BJ (cell line): ENCODE measurements at regions of chr1 and their contacts with region 1.

Region 1: DNA sequence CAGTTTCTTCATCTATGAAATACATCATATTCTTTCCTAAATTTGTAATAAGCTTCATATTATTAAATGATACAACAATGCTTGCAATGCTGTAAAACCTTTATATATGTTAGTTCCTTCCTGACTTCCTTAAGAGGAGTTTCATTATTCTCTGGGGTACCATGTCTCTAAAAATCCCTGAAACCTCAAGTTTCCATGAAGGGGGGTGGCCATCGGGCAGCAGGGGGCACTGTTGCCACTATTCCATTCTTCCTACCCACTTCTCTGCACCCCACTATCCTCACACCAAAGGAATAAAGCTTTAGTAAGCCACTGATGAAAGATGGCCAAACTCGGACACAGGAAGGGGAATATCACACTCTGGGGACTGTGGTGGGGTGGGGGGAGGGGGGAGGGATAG is 9.0 kb upstream of the DMRTB1 start:
- DNase-seq: no peak
- H3K4me3 ChIP-seq: no peak overlapping the region
- H3K27me3 ChIP-seq: no peaks in the 10 kb centered on the region
- CTCF ChIP-seq: peak; percentile 33

Region 2: GRCh38 chr1:53381790-53382401 is 68.3 kb before region 1 on chr1:
- CTCF ChIA-PET with region 1: no interaction called
- POLR2A ChIA-PET with region 1: no interaction called
- DNase-seq: no peak
- H3K4me3 ChIP-seq: no peak overlapping the region
- H3K27me3 ChIP-seq: peaks cover 6% of the 10 kb centered on the region
- CTCF ChIP-seq: no peak

Region 3: DNA sequence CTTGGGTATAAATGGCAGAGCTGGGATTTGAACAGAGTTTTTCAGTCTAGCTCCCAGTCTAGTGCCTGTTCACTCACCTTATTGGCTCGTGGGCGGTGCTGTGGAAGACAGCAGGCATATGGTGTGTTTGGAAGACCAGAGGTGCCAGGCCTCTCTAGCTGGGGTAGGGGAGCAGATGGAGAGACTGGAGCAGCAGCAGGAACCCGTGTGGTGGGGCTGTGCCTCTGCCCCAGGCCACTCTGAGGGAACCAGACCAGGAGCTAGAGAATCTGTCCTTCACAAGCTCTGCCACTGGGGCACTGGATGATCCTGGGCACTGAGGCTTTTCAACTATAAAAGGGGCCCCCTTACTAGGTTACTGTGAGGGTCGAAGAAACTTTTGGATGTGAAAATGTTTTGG is 14.9 kb after region 1 on chr1:
- CTCF ChIA-PET with region 1: interaction called, 10 read pairs
- POLR2A ChIA-PET with region 1: no interaction called
- DNase-seq: no peak
- H3K4me3 ChIP-seq: no peak overlapping the region
- H3K27me3 ChIP-seq: peaks cover 3% of the 10 kb centered on the region; the same call in 1 of the 2 replicates
- CTCF ChIP-seq: no peak

Region 4: DNA sequence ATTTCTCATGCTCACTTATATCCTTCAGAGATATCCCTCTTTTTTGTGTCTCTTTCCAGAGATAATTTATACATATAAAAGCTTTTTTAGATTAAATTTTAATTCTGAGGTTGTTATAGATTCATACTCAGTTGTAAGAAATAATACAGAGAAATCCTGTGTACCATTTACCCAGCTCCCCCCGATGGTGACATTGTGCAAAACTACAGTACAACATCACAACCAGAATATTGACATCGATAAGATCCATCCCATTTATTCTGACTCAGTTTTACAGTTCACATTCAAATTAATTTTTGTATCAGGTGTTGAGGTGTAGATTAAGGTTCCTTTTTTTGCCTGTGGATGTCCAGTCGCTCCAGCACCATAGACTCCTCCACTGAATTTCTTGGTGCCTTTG is 23.2 kb after region 1 on chr1:
- CTCF ChIA-PET with region 1: interaction called, 13 read pairs
- POLR2A ChIA-PET with region 1: no interaction called
- DNase-seq: no peak
- H3K4me3 ChIP-seq: no peak overlapping the region
- H3K27me3 ChIP-seq: peaks cover 18% of the 10 kb centered on the region
- CTCF ChIP-seq: peak; percentile 56

Region 5: GRCh38 chr1:53511933-53512806 is 61.9 kb after region 1 on chr1:
- CTCF ChIA-PET with region 1: no interaction called
- POLR2A ChIA-PET with region 1: no interaction called
- DNase-seq: peak; percentile 95
- H3K4me3 ChIP-seq: no peak overlapping the region
- H3K27me3 ChIP-seq: no peaks in the 10 kb centered on the region
- CTCF ChIP-seq: no peak

Region 6: GRCh38 chr1:53541761-53542550 is 91.7 kb after region 1 on chr1:
- CTCF ChIA-PET with region 1: no interaction called
- POLR2A ChIA-PET with region 1: no interaction called
- DNase-seq: peak; percentile 90
- H3K4me3 ChIP-seq: no peak overlapping the region
- H3K27me3 ChIP-seq: no peaks in the 10 kb centered on the region
- CTCF ChIP-seq: peak; percentile 29; the same call in 1 of the 2 replicates